Left ventricle myocardium superior (tissue), 1 donor: ENCODE measurements at regions of chr19 and their contacts with region 1.

Region 1: GRCh38 chr19:48152551-48152950 is 17.6 kb downstream of the LIG1 start:
- DNase-seq: peak; percentile 59
- ATAC-seq: peak; percentile 57

Region 2: GRCh38 chr19:48108997-48109782 is 43.4 kb before region 1 on chr19:
- intact Hi-C with region 1: loop called (anchors 5 kb)
- DNase-seq: no peak
- ATAC-seq: no peak

Region 3: DNA sequence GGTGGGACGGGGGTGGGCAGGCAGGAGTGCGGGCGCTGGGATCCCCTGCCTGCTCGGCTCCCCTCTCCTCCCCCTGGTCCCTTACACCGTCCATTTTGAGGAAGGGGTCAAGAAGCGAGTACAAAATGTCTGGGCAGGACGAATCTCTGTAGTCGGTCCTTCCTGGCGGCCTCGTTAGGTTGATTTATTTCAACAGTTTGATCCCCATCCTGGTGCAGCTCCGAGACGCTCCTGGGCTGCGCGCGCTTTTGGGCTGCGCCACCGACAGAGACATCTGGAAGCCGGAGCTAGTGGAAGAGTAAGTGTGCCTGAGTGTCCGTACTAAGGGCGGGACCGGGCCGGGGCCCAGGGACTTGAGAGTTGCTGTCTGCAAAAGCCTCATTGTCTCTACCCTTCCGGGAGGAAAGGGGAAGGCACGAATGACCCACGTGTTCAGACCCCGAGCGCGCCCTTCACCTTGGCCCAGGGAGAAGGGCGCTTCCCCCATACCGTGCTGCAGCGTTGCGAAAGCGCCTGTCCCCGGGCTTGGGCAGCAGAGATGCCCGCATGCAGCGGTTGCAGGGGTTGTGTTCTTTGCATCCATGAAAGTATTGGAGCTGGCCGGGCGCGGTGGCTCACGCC is 119.1 kb after region 1 on chr19:
- intact Hi-C with region 1: no loop called
- DNase-seq: peak; percentile 61
- ATAC-seq: peak; percentile 75